Lower leg skin (tissue), 4 donors: ENCODE measurements at regions of chr6 and their contacts with region 1.

Region 1: DNA sequence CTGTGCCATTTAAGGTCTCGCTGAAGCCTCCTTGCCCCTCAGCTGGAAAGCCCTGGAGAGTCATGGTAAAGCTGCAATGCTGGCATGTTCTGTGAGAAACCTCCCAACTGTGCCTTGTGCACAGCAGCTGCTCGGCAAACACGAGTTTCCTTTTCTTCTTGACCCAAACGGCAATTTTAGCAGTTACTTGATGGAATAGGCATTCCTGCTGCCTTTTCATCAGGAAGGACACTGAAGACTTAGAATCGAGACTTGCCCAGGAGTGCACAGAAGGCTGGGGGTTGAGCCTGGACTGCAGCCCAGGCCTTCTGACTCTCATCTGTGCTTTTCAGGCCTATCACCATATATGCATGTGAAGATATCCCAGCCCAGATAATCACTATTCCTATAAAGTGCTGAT is 28.7 kb upstream of the CLDN20 start:
- DNase-seq: peak in 1 of 2 donors; percentile 23
- H3K4me3 ChIP-seq: no peak overlapping the region
- CTCF ChIP-seq: no peak
- POLR2A ChIP-seq: no peak

Region 2: GRCh38 chr6:154319231-154319858 is 915.7 kb before region 1 on chr6:
- intact Hi-C with region 1: no loop called
- DNase-seq: no peak
- H3K4me3 ChIP-seq: no peak overlapping the region
- CTCF ChIP-seq: no peak
- POLR2A ChIP-seq: no peak

Region 3: GRCh38 chr6:154928325-154928922 is 306.7 kb before region 1 on chr6:
- intact Hi-C with region 1: loop called (anchors 10 kb)
- DNase-seq: peak; percentile 64 to 83
- H3K4me3 ChIP-seq: no peak overlapping the region
- CTCF ChIP-seq: peak in 1 of 3 donors; percentile 21
- POLR2A ChIP-seq: no peak